ENCODE measurements at regions of chr11 and their contacts with region 1.

Region 1: DNA sequence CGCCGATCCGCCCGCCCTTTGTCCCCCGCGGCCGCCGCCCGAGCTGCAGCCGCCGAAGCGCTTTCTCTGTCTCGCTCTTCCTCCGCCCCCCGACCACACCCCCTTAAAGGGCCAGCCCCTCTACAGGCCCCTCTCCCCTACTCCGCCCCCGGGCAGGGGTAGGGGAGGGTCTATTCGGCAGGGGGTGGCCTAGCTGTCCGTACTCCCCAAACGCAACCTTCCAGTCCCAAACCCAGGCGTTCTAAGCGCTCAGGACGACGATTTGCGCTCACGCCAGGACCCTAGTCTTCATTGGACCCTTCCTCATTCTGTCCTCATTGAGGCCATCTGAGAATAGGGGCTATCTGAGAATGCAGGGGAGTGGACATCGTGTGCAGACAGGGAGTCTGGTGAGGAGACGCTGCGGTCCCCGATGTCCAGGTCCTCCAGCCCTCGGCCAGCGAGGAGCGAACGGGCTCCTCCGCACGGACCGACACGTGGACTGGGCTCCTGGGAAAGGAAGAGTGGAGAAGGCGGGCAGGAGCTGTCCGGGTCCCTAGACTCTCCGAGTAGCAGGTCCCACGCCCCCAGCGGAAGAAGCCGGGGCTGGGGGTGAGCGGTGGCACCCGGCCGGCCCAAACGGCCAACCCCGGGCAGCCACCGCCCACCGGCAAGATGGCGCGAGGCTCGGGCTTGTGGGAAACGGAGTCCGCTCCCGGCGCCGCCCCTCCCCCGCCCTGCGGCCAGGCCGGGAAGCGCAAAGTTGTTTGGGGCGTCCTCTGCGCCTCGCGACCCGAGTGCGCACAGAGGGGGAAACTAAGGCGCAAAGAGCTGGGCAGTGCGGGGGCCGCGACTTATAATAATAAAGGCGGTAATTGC is at the start of gene PPP1R14B:
- DNase-seq: peak; percentile 82

Region 2: DNA sequence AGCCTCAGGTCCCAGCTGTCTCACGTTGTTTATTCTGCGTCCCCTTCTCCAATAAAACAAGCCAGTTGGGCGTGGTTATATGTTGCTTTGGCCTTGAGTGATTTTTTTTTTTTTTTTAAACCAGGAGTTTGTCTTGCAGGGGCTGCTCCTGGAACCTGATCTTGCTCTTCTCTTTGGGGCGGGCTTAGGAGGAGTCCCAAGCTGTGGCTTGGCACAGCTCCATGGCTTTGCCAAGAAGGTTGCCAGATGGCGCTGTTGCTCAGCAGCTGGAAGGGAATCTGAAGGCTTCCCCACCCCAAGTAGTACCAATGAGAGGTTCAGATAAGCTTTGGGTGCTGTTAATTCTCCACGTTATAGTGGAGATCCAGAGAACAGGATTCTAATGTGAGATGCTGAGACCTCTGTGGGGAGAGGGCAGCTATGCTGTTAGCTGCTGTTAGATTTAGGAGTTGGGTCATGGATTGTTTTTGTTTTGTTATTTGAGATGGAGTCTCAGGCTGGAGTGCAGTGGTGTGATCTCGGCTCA is 42.6 kb before region 1 on chr11:
- CTCF ChIA-PET with region 1: interaction called, 14 read pairs
- POLR2A ChIA-PET with region 1: no interaction called
- DNase-seq: peak; percentile 78

Region 3: GRCh38 chr11:64234835-64235379 is 12.2 kb before region 1 on chr11:
- CTCF ChIA-PET with region 1: interaction called, 3 read pairs
- POLR2A ChIA-PET with region 1: interaction called, 59 read pairs
- DNase-seq: no peak

Region 4: GRCh38 chr11:64259533-64260067 is 12.5 kb after region 1 on chr11:
- CTCF ChIA-PET with region 1: no interaction called
- POLR2A ChIA-PET with region 1: interaction called, 18 read pairs
- DNase-seq: no peak

Region 5: GRCh38 chr11:64304316-64305072 is 57.4 kb after region 1 on chr11:
- CTCF ChIA-PET with region 1: interaction called, 7 read pairs
- POLR2A ChIA-PET with region 1: interaction called, 12 read pairs
- DNase-seq: peak; percentile 81

Measured in HEK293T (cell line).